KBM-7 (cell line): ENCODE measurements at regions of chr11 and their contacts with region 1.

Region 1: DNA sequence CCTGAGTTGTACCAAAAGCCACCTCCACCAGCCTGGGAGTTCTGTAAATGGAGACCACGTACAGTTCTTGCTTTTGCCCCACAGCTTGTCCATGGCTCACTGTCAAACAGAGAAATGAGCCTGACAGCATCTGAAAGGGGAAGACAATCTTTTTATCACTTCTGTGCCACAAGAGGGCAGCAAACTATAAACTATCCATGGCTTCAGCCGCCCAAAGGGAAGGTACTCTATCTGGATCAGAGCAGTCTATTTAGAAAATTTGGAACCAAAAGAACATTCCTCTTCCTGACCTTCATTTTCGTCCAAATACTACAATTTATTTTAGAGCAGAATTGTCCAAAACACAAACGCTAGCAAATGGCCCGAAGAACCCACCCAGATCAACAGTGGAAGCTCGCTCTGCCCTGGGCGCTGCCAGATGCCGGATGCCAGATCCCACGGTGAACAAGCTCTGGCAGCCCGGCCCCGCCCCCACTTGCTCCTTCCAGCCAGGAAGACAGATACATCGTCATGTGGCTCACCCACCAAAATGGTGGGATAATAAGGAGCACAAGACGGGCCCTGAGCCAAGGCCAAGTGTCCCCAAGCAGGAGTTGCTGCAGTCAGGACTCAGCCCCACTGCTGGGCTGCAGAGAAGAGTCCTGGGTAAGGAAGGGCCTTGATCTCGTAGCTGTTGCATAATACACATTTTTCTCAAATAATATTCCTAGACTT is 23.9 kb upstream of the SCGB1A1 start:
- DNase-seq: peak; percentile 81

Region 2: GRCh38 chr11:62678770-62679696 is 284.1 kb after region 1 on chr11 and contains the start of gene UBXN1:
- in situ Hi-C with region 1: loop called (anchors 25 kb)
- DNase-seq: peak; percentile 91